Sciatic nerve (tissue), 2 donors: ENCODE measurements at regions of chr20 and their contacts with region 1.

Region 1: GRCh38 chr20:23606652-23607049 is 934 bp upstream of the CST9 start:
- DNase-seq: peak; percentile 90
- ATAC-seq: peak; percentile 93

Region 2: DNA sequence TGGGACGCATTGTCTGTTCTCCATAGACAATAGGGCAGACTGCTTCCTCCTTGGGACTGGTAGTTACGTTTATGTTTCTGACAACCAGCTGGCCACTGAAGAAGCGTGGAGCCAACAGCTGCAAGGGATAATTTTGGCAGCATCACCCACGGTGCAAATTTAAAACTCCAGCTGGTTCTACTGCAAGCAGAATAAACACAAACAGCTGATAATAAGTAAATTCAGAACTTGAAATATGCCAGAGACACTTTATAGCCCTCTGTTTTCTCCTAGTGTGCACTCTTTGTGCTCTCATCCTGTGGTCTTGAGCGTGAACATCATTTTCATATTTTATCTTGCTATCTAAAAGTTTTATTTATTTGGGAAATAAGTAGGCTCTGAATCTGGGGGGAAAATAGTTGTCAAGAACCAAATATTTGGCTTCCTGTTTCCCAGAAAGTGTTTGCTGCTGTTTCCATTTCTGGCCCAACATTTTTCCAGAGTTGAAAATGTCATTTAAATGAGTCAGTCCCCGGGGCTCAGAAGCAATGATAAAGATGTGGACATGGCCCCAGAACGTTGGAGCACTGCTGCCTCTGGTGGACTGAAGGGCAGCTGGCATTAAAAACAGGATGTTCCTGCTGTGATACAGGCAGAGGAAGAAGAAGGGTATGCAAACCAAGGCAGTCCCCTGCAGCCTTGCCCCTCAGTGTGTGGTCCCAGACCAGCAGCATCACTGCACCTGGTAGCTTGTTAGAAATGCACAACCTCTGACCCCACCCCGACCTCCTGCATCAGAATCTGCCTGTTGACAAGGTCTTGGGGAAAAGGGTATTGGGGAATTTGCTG is 544.7 kb before region 1 on chr20:
- intact Hi-C with region 1: no loop called
- DNase-seq: no peak
- ATAC-seq: peak; percentile 81

Region 3: GRCh38 chr20:23441850-23442313 is 164.8 kb before region 1 on chr20:
- intact Hi-C with region 1: loop called (anchors 5 kb)
- DNase-seq: peak; percentile 83
- ATAC-seq: peak; percentile 90

Region 4: DNA sequence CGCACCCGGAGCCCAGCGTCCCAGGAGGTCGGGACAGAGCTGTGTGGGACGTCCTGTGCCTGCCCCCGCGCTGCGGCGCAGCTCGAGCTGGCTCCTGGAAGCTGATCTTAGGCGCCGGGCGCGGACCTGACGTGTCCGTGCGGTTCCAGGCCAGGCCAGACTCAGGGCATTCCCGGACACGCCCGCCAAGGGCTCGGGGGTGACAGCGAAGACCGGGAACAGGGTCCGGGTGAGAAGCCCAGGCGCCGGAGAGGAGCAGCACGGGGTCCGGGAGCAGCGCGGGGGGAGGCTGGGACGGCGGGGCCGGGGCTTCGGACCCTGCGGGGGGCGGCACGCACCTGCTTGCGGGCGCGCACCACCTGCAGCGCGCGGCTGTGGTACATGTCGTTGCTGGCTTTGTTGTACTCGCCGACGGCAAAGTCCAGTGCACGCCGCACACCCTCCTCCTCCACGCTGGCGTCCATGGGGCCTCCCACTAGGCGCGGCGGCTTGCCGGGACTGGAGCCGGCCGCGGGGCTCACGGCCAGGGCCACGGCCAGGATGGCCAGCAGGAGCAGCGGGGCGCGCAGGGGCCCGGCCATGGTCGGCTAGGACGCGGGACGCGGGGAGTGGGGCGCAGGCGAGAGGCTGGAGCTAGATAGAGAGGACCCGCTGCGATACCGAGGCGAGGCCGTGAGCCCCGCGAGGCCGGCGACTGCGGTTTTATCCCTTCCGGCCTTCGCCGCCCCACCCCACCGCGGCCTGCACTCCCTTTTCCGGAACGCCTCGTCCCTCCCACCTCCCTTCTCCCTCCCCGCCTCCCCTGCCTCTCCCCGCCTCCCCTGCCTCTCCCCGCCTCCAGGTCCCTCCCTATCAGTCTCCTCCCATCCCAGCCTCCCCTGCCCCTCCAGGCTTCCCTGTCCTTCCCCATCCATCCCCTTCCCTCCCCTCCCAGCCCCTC is 30.9 kb after region 1 on chr20 and contains the start of gene CST3:
- intact Hi-C with region 1: no loop called
- DNase-seq: peak; percentile 95
- ATAC-seq: peak; percentile 90
- total RNA-seq, gene CST3: 731 TPM